ENCODE measurements at regions of chr15 and their contacts with region 1.

Region 1: GRCh38 chr15:29668120-29668602 is 154.1 kb downstream of the TJP1 start:
- DNase-seq: peak; percentile 67 to 87 (median 72)
- ATAC-seq: peak; percentile 86
- H3K4me3 ChIP-seq: no peak overlapping the region
- H3K4me1 ChIP-seq: peaks cover 7% of the 10 kb centered on the region
- CTCF ChIP-seq: peak; percentile 46

Region 2: DNA sequence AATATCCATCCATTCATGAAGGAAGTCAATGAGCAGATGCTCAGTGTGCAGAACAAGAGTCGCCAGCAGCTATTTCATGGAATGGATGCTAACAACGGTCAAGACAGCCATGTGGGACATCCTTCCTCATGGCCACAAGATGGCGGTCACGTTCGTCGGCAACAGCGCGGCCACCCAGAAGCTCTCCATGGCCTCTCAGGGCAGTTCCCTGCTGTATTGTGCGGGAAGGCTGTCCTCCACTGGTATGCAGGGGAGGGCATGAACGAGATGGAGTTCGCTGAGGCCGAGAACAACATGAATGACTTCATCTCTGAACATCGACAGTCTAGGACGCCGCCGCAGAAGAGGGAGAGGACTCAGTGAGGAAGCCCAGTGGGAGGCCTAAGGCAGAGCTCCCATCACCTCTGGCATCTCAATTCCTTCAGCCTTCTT is 54.2 kb before region 1 on chr15:
- intact Hi-C with region 1: loop called in 1 of 2 experiments (anchors 5 kb)
- DNase-seq: no peak
- ATAC-seq: no peak
- H3K4me3 ChIP-seq: no peak overlapping the region
- H3K4me1 ChIP-seq: no peaks in the 10 kb centered on the region
- CTCF ChIP-seq: no peak

Region 3: DNA sequence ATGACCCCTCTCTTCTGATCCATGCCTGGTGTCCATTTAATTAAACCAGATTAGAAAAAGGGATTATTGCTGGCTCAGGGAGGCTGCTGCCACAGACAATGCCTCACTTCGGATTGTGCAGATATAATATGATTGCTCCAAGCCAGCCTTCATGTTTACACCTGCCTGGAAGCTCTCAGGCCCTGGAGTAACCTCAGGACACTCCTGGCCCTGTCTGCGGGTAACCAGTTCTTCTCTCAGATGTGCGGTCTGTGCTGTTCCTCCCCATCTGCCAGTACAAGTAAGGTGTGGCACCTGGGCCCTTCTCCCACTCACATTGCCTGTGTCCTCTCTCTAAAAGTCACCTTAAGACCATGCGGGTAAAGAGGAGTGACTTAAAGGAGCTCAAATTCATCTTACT is 405.8 kb after region 1 on chr15:
- intact Hi-C with region 1: loop called in 1 of 2 experiments (anchors 10 kb)
- DNase-seq: no peak
- ATAC-seq: no peak
- H3K4me3 ChIP-seq: no peak overlapping the region
- H3K4me1 ChIP-seq: no peaks in the 10 kb centered on the region
- CTCF ChIP-seq: no peak

Measured in mucosa of descending colon (tissue), 3 donors.